Activated B cell treated with CpG ODN at 0.5 μM for 24 hours (primary cell): ENCODE measurements at regions of chr6 and their contacts with region 1.

Region 1: GRCh38 chr6:112780498-112781096 is 433.5 kb downstream of the RFPL4B start:
- DNase-seq: peak; percentile 23
- ATAC-seq: peak; percentile 80
- H3K4me3 Mint-ChIP-seq: no peak overlapping the region
- H3K27ac Mint-ChIP-seq: no peak overlapping the region
- H3K4me1 Mint-ChIP-seq: peaks cover 3% of the 10 kb centered on the region
- H3K27me3 Mint-ChIP-seq: no peaks in the 10 kb centered on the region
- CTCF ChIP-seq: peak; percentile 49

Region 2: GRCh38 chr6:112180095-112180820 is 600.3 kb before region 1 on chr6:
- CTCF ChIA-PET with region 1: no interaction called
- POLR2A ChIA-PET with region 1: no interaction called
- intact Hi-C with region 1: loop called (anchors 2 kb)
- DNase-seq: no peak
- ATAC-seq: peak; percentile 57
- H3K4me3 Mint-ChIP-seq: no peak overlapping the region
- H3K27ac Mint-ChIP-seq: no peak overlapping the region
- H3K4me1 Mint-ChIP-seq: no peaks in the 10 kb centered on the region
- H3K27me3 Mint-ChIP-seq: peaks cover 12% of the 10 kb centered on the region
- CTCF ChIP-seq: no peak

Region 3: DNA sequence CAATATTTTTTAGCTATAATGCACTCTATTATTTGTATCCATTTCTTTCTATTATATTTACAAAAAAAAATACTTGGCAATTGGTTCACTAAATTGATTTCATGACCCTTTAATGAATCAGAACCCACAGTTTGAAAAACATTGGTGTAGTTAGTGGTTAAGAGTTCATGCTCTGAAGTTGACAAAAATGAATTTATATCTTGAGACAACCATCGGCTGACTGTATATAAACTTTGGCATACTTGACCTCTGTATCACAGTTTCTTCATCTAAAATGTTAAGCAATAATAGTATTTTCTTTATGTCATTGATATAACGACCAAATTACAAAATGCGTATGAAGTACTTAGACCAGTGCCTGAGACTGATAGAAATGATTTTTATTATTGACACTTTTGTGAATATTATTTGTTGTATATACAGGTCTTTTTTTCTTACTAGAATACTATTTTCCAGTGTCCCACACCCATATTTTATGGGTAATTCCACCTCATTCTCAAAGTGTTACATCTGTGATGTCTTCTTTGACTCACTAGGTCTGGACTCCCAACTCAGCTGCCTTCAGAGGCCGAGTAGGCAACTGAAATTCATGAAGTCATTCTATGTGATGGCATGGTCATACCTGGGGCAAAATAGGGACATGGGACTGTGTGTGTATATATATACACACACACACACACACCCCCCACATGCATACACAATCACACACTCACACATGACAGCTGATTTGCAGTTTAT is 25.7 kb after region 1 on chr6:
- CTCF ChIA-PET with region 1: no interaction called
- POLR2A ChIA-PET with region 1: no interaction called
- intact Hi-C with region 1: no loop called
- DNase-seq: no peak
- ATAC-seq: no peak
- H3K4me3 Mint-ChIP-seq: no peak overlapping the region
- H3K27ac Mint-ChIP-seq: no peak overlapping the region
- H3K4me1 Mint-ChIP-seq: no peaks in the 10 kb centered on the region
- H3K27me3 Mint-ChIP-seq: no peaks in the 10 kb centered on the region
- CTCF ChIP-seq: no peak

Region 4: GRCh38 chr6:113879186-113880096 is 1098.8 kb after region 1 on chr6:
- CTCF ChIA-PET with region 1: interaction called, 11 read pairs
- POLR2A ChIA-PET with region 1: no interaction called
- intact Hi-C with region 1: loop called (anchors 1 kb)
- DNase-seq: no peak
- ATAC-seq: peak; percentile 100
- H3K4me3 Mint-ChIP-seq: no peak overlapping the region
- H3K27ac Mint-ChIP-seq: no peak overlapping the region
- H3K4me1 Mint-ChIP-seq: peaks cover 7% of the 10 kb centered on the region
- H3K27me3 Mint-ChIP-seq: peaks cover 5% of the 10 kb centered on the region
- CTCF ChIP-seq: no peak

Region 5: DNA sequence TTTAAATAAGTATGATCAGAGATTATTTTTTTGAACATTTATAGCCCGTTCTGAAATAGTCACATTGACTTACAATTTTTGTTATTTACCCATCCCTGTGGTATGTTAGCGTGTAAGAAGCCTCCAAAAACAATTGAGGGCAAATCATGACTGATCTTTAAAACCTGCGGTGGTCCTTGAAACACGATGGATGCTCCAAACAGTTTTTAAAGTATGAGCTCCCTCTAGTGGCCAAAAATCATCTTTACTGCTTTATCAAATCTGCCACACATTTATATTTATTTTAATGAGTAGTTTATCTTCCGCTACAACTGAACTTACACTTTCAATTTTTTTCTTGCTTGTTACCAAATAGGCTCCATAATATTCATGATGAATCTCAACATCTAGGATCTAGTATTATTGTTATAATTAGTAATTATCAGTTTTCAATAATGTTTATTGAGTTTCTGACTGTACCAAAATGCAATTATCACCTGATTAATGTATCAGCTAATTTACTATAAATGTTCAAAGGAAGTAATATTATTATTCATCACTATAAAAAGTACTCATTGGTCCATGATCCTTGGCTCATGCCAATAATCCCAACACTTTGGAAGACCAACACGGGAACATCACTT is 1128.7 kb after region 1 on chr6:
- CTCF ChIA-PET with region 1: interaction called, 17 read pairs
- POLR2A ChIA-PET with region 1: no interaction called
- intact Hi-C with region 1: loop called (anchors 1 kb)
- DNase-seq: no peak
- ATAC-seq: peak; percentile 37
- H3K4me3 Mint-ChIP-seq: no peak overlapping the region
- H3K27ac Mint-ChIP-seq: no peak overlapping the region
- H3K4me1 Mint-ChIP-seq: no peaks in the 10 kb centered on the region
- H3K27me3 Mint-ChIP-seq: peaks cover 2% of the 10 kb centered on the region
- CTCF ChIP-seq: peak; percentile 63

Region 6: DNA sequence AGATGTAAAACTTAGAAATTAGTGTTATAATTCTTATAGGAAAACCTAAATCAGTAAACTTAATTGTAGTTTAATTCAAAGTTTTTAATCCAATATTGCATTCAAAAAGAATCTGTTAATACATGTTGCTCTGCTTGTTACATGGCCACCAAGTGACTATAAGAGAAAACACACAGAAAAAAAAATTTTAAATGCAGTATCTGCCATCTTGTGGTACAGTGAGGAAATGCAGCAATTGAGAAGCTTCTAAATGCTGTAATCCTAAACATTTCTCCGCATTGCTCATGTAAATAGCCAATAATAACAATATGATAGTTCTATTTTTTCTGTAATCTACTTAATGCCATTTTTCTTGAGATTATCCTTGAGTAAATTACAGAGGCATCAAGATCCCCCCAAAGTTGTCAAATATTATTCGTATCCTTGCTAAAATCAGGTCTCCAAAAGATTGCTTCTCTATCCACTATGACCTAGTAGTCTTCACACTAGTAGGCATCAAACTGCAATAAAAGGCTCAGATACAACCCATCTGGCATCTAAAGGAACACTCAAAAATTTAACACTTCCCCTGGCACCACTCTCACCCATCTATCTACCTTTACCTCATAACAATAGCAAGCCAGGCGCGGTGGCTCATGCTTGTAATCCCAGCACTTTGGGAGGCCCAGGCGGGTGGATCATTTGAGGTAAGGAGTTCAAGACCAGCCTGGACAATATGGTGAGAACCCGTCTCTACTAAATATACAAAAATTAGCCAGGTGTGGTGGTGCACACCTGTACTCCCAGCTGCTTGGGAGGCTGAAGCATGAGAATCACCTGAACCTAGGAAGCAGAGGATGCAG is 1155.7 kb after region 1 on chr6:
- CTCF ChIA-PET with region 1: interaction called, 4 read pairs
- POLR2A ChIA-PET with region 1: no interaction called
- intact Hi-C with region 1: loop called (anchors 1 kb)
- DNase-seq: no peak
- ATAC-seq: peak; percentile 67
- H3K4me3 Mint-ChIP-seq: no peak overlapping the region
- H3K27ac Mint-ChIP-seq: no peak overlapping the region
- H3K4me1 Mint-ChIP-seq: no peaks in the 10 kb centered on the region
- H3K27me3 Mint-ChIP-seq: no peaks in the 10 kb centered on the region
- CTCF ChIP-seq: peak; percentile 92

Region 7: DNA sequence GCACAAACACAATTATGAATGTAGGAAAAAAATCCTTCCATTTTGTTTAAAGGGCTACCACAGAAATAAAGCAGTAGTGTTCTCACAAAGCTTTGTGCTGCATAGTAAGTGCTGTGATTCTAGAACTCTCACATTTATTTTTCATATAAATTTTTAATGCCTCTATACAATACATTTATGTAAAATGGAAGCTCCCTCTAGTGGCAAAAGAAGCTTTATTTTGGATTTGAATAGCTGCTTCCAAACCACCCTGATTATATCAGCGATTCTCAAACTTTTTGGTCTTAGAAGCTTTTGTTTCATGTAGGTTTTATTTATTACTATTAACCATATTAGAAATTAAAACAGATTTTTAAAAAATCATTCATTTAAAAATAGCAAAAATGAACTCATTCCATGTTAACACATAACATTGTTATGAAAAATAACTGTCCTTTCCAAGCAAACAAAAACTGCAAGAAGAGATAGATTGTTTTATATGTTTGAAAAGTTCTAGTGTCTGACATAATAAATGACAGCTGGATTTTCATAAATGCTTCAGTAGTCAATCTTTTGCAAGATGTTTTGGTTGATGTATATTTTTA is 1523.8 kb after region 1 on chr6:
- CTCF ChIA-PET with region 1: no interaction called
- POLR2A ChIA-PET with region 1: no interaction called
- intact Hi-C with region 1: loop called (anchors 10 kb)
- DNase-seq: no peak
- ATAC-seq: no peak
- H3K4me3 Mint-ChIP-seq: no peak overlapping the region
- H3K27ac Mint-ChIP-seq: no peak overlapping the region
- H3K4me1 Mint-ChIP-seq: no peaks in the 10 kb centered on the region
- H3K27me3 Mint-ChIP-seq: no peaks in the 10 kb centered on the region
- CTCF ChIP-seq: no peak